GM10248 (cell line): ENCODE measurements at regions of chr5 and their contacts with region 1.

Region 1: DNA sequence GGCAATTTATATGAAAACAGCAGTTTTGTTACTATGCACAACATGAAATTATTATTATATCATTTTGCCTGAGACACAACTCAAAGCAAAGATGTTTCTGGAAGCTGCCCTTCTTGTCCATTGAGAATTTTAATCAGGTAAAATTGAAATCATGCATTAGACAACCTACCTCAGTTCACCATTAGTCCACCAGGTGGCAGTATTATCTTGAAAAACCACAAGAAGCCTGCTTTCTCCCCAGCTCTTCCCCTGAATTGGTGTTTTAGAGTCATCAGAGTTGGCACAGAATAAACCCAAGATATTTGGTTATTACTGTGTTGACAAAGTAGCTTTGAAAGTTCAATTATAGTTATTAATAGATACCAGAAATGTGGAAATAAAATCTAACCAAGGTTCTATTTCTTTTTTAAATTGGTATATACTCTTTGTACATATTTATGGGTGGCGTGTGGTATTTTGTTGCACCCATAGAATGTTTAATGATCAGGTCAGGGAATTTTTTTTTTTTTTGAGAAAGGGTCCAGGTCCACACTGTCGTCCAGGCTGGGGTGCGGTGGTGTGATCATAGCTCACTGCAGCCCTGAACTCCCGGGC is 25.7 kb downstream of the UTP15 start:
- DNase-seq: peak; percentile 52
- CTCF ChIP-seq: peak; percentile 81

Region 2: GRCh38 chr5:73605227-73606020 is 14.2 kb after region 1 on chr5:
- CTCF ChIA-PET with region 1: interaction called, 12 read pairs
- POLR2A ChIA-PET with region 1: no interaction called
- DNase-seq: no peak
- CTCF ChIP-seq: no peak

Region 3: GRCh38 chr5:73693481-73694061 is 102.4 kb after region 1 on chr5:
- CTCF ChIA-PET with region 1: interaction called, 35 read pairs
- POLR2A ChIA-PET with region 1: no interaction called
- DNase-seq: no peak
- CTCF ChIP-seq: peak; percentile 22

Region 4: GRCh38 chr5:73792687-73793320 is 201.6 kb after region 1 on chr5:
- CTCF ChIA-PET with region 1: interaction called, 341 read pairs
- POLR2A ChIA-PET with region 1: no interaction called
- DNase-seq: peak; percentile 56
- CTCF ChIP-seq: peak; percentile 93